Activated CD4-positive, alpha-beta T cell treated with anti-CD3 and anti-CD28 coated beads, Interleukin-2, amount 10 ng/mL, durations not matched to agents 24 days and 14 days (primary cell): ENCODE measurements at regions of chrX and their contacts with region 1.

Region 1: DNA sequence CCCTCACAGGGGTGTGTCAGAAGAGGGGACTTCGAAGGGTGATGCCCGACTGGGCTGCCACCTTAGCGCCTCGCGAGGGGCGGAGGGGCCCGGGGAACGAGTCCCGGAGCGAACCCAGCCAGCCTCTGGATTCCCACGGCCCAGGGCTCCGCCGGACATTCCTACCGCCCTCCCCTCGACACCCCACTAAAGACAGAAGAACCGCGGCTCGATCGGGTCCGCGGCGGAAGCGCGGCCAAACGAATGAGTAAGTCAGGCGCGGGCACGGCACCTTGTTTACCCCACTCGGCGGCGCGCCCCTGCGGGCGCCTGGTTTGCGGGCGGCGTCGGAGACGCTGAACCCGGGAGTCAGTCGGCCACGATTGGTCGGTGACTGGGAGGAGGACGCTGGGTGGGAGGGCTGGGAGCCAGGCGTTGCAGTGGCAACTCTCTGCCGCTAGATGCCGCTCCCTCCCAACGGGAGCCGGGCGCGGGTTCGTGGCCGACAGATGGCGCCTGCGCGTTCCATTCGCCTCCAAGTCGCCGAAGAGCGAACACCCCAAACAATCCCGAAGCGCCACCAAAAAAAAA is 1.4 kb upstream of the STAG2 start:
- DNase-seq: peak; percentile 95
- H3K4me3 Mint-ChIP-seq: peak overlapping the region; percentile 84
- H3K27ac Mint-ChIP-seq: peak overlapping the region; percentile 98
- H3K4me1 Mint-ChIP-seq: peaks cover 14% of the 10 kb centered on the region
- H3K27me3 Mint-ChIP-seq: no peaks in the 10 kb centered on the region

Region 2: GRCh38 chrX:123859846-123860838 is 100.0 kb before region 1 on chrX and contains the start of gene XIAP:
- intact Hi-C with region 1: loop called (anchors 1 kb)
- DNase-seq: peak; percentile 90
- H3K4me3 Mint-ChIP-seq: peak within 1 kb of the TSS; percentile 84
- H3K27ac Mint-ChIP-seq: peak within 1 kb of the TSS; percentile 92
- H3K4me1 Mint-ChIP-seq: peaks cover 5% of the 10 kb centered on the region
- H3K27me3 Mint-ChIP-seq: no peaks in the 10 kb centered on the region
- total RNA-seq, gene XIAP: 34.7 and 36.3 TPM in 2 replicates

Region 3: GRCh38 chrX:123878252-123878721 is 81.8 kb before region 1 on chrX:
- intact Hi-C with region 1: loop called (anchors 5 kb)
- DNase-seq: peak; percentile 60
- H3K4me3 Mint-ChIP-seq: peak overlapping the region; percentile 57
- H3K27ac Mint-ChIP-seq: peak overlapping the region; percentile 80
- H3K4me1 Mint-ChIP-seq: peaks cover 16% of the 10 kb centered on the region
- H3K27me3 Mint-ChIP-seq: no peaks in the 10 kb centered on the region

Region 4: GRCh38 chrX:123976706-123977316 is 16.7 kb after region 1 on chrX:
- intact Hi-C with region 1: loop called (anchors 1 kb)
- DNase-seq: no peak
- H3K4me3 Mint-ChIP-seq: peak overlapping the region; percentile 41
- H3K27ac Mint-ChIP-seq: peak overlapping the region; percentile 58
- H3K4me1 Mint-ChIP-seq: peaks cover 19% of the 10 kb centered on the region
- H3K27me3 Mint-ChIP-seq: no peaks in the 10 kb centered on the region

Region 5: DNA sequence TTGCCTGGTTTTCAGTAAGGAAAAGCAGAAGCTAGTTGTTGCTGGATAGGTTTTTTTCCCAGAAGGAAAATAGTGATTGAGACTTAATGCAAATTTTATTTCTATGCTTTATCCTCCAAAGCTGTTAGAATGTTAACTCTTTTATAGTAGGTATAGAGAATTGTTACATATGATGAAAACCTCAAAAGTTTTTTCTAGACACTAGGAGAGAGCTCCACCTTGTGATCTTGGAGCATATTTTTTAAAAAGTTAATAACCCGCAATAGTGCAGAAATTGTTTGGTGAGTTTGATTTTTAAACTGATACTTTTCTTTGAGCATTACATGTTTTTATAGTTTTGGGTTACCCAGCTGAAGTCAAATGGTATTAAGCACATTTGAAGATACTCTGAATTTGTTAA is 57.9 kb after region 1 on chrX:
- intact Hi-C with region 1: loop called (anchors 1 kb)
- DNase-seq: no peak
- H3K4me3 Mint-ChIP-seq: no peak overlapping the region
- H3K27ac Mint-ChIP-seq: no peak overlapping the region
- H3K4me1 Mint-ChIP-seq: peaks cover 5% of the 10 kb centered on the region
- H3K27me3 Mint-ChIP-seq: no peaks in the 10 kb centered on the region

Region 6: DNA sequence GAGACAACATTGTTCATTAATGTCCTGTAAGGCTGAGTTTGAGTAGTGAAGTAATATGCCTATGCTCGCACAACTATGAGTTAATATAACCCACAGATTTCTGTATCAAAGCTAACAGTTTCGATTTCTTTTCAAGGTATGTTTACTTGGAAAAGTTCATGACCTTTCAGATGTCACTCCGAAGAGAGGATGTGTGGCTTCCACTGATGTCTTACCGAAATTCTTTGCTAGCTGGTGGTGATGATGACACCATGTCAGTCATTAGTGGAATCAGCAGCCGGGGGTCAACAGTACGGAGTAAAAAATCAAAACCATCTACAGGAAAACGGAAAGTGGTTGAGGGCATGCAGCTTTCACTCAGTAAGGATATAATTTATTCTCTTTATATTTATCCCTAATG is 126.3 kb after region 1 on chrX:
- intact Hi-C with region 1: loop called (anchors 1 kb)
- DNase-seq: peak; percentile 82
- H3K4me3 Mint-ChIP-seq: peak overlapping the region; percentile 37
- H3K27ac Mint-ChIP-seq: peak overlapping the region; percentile 86
- H3K4me1 Mint-ChIP-seq: peaks cover 25% of the 10 kb centered on the region
- H3K27me3 Mint-ChIP-seq: no peaks in the 10 kb centered on the region

Region 7: DNA sequence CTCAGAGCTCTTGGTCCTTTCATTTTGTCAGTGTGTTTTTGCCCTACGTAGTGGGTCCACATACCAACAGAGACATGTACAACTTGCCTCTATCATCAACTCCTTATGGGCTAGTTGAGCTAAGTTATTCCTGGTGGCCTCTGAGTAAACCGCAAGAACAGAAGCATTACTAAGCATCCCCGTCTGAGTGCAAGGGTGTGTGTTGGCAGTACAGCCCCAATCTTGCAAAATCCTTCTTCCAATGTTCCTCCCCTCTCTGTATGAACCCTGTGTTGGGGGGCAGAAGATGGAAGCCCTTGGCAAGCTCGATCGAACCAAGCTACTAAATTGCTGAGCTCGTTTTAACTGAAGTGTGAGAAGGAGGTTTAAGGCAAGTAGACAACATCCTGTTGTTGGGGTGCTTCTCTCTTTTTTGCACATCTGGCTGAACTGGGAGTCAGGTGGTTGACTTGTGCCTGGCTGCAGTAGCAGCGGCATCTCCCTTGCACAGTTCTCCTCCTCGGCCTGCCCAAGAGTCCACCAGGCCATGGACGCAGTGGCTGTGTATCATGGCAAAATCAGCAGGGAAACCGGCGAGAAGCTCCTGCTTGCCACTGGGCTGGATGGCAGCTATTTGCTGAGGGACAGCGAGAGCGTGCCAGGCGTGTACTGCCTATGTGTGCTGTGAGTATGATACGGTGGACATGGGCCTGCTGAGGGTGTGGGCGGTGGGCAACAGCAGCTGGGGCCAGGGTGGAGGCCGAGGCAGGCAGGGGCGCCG is 386.2 kb after region 1 on chrX and contains the start of gene SH2D1A:
- intact Hi-C with region 1: loop called (anchors 2 kb)
- DNase-seq: peak; percentile 80
- H3K4me3 Mint-ChIP-seq: peak within 1 kb of the TSS; percentile 88
- H3K27ac Mint-ChIP-seq: peak within 1 kb of the TSS; percentile 99
- H3K4me1 Mint-ChIP-seq: peaks cover 38% of the 10 kb centered on the region
- H3K27me3 Mint-ChIP-seq: no peaks in the 10 kb centered on the region
- total RNA-seq, gene SH2D1A: 51.7 and 53.9 TPM in 2 replicates